Caco-2 (cell line): ENCODE measurements at regions of chr3 and their contacts with region 1.

Region 1: DNA sequence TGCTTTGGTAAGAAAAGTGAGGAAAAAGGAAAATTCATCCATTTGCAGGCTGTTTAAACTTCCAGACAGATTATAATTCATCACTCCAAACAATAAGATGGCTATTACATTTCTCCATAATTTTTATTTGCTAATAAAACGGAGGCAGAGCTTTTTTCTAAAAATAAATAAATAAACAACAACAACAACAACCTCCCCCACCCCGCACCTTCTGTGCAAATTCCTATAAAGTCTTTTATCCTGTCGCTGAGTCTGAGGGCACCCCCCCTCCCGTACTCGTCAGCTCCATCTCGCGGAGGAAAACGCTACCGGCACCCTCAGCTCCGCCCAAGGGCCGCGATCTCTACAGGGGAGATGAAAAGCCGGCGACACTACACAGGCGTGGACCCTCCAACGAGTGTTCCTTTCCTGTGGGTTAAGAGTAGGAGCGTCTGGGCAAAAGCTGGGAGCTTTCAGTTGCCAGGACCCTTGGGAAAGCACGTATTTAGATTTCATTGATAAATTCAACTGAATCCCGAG is 1.0 kb upstream of the ATP1B3 start:
- DNase-seq: peak; percentile 85 to 90
- H3K4me3 ChIP-seq: peak overlapping the region; percentile 57
- H3K4me3 Mint-ChIP-seq: peak overlapping the region; percentile 93
- H3K27ac Mint-ChIP-seq: peak overlapping the region; percentile 94
- H3K4me1 ChIP-seq: peaks cover 15% of the 10 kb centered on the region; the same call in 1 of the 2 replicates
- H3K4me1 Mint-ChIP-seq: peaks cover 6% of the 10 kb centered on the region
- H3K27me3 ChIP-seq: no peaks in the 10 kb centered on the region
- H3K27me3 Mint-ChIP-seq: no peaks in the 10 kb centered on the region
- CTCF ChIP-seq: peak; percentile 78 to 93

Region 2: GRCh38 chr3:141913150-141913811 is 37.8 kb after region 1 on chr3:
- CTCF ChIA-PET with region 1: no interaction called
- POLR2A ChIA-PET with region 1: no interaction called
- intact Hi-C with region 1: loop called (anchors 2 kb)
- DNase-seq: peak in 1 of 2 experiments; percentile 57
- H3K4me3 ChIP-seq: no peak overlapping the region
- H3K4me3 Mint-ChIP-seq: no peak overlapping the region
- H3K27ac Mint-ChIP-seq: no peak overlapping the region
- H3K4me1 ChIP-seq: no peaks in the 10 kb centered on the region
- H3K4me1 Mint-ChIP-seq: no peaks in the 10 kb centered on the region
- H3K27me3 ChIP-seq: no peaks in the 10 kb centered on the region
- H3K27me3 Mint-ChIP-seq: no peaks in the 10 kb centered on the region
- CTCF ChIP-seq: peak; percentile 45 to 53